ENCODE measurements at regions of chr14 and their contacts with region 1.

Region 1: DNA sequence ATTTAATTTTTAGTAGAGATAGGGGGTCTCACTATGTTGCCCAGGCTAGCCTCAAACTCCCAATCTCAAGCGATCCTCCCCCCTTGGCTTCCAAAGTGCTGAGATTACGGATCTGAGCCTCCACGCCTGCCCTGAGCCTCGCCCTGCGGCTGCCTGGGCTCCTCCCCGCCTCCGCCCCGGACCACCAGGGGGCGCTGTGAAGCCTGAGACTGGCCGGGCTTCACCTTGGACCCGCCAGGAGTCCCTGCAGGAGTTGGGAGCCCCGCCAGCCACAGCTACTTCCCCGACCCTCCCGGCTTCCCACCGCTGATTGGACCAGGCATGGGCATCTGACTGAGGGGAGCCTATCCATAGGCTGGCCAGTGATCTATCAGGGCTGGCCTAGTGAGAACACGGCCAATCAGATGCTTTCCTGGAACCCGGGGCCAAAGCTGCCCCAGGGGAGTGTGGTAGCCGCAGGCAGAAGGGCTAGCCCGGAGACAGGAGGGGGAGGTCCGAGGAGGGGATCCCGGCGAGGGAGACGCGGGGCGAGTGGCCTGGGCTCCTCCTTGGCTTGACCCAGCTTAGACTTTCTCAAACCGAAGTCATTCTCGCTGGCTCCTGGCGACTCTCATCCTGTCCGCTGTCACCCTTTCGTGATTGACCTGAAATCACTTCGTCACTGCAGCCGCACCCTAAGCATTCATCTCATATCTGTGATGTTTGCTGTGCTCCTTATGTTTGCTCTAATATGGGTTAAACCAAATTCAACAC is 15.1 kb upstream of the ANKRD9 start:
- DNase-seq: peak; percentile 84 to 91 (median 87)
- H3K4me3 ChIP-seq: peak overlapping the region; percentile 59 to 87
- H3K4me3 Mint-ChIP-seq: peak overlapping the region; percentile 80 to 93 (median 89)
- H3K27ac ChIP-seq: peak overlapping the region; percentile 48
- H3K27ac Mint-ChIP-seq: peak overlapping the region; percentile 70 to 95 (median 90)
- H3K4me1 ChIP-seq: peaks cover 22% of the 10 kb centered on the region
- H3K4me1 Mint-ChIP-seq: peaks cover 14 to 31% (median 24%) of the 10 kb centered on the region in 4 donors
- H3K27me3 ChIP-seq: no peaks in the 10 kb centered on the region
- H3K27me3 Mint-ChIP-seq: no peaks in the 10 kb centered on the region

Region 2: DNA sequence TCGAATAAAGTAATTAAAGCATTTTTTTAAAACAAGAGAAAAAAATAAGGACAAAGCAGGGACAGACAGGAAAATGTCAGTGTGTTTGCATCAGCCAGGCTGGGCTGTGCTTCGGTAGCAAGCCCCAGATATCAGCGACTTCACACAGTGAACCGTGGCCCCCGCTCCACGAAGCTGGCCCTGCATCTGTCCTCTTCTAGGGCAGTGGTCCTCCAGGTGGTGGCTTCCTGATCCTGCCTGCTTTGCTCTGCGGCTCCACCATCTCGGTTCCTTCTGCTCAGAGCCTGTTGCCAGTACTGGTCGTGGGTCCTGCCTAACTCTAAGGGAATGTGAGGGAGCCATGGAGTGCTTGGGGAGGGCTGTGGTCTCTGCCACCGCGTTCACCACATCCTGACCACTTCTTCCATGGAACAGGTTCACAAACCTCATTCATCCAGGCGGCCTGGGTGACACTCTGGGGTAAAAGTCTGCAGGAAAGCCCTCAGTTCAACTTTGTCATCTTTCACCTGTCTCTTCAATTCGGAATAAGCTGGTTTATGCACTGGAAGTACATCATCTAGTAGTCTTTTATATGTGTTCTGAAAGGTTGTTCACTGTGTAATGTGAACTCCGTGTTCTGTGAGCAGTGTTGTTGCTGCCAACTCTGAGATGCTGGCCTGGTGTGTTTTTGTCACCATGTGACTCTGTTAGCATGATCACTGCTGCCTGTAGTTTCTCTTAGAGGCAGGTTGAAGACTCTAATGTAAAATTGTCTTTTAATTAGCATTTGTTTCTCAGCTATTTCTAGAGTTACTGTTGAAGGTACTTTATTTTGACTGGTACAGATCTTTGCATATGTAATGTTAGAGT is 62.9 kb before region 1 on chr14:
- CTCF ChIA-PET with region 1: no interaction called
- POLR2A ChIA-PET with region 1: no interaction called
- intact Hi-C with region 1: no loop called
- DNase-seq: no peak
- H3K4me3 ChIP-seq: no peak overlapping the region
- H3K4me3 Mint-ChIP-seq: no peak overlapping the region
- H3K27ac ChIP-seq: no peak overlapping the region
- H3K27ac Mint-ChIP-seq: peak overlapping the region in 1 of 7 donors; percentile 62
- H3K4me1 ChIP-seq: no peaks in the 10 kb centered on the region
- H3K4me1 Mint-ChIP-seq: peaks cover 0 to 4% (median 2%) of the 10 kb centered on the region in 4 donors
- H3K27me3 ChIP-seq: no peaks in the 10 kb centered on the region
- H3K27me3 Mint-ChIP-seq: no peaks in the 10 kb centered on the region

Region 3: DNA sequence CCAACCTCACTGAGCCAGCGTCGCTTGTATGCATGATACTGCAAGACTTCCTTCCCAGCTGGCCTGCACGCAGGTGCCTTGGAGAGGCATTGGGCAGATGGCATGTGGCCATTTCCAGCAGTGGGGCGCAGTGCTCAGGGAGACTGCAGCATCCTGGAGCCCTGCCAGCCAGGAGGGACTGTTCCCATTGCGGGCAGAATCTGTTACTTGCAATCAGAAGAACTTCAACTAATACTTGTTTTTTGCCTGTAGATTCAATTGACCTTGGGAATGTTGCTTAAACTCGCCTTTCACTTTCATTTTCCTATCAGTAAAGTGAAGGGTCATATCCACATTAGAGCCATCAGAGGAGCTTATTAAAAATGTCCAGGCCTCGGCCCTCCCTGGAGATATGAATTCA is 44.9 kb before region 1 on chr14:
- CTCF ChIA-PET with region 1: no interaction called
- POLR2A ChIA-PET with region 1: no interaction called
- intact Hi-C with region 1: no loop called
- DNase-seq: no peak
- H3K4me3 ChIP-seq: no peak overlapping the region
- H3K4me3 Mint-ChIP-seq: no peak overlapping the region
- H3K27ac ChIP-seq: no peak overlapping the region
- H3K27ac Mint-ChIP-seq: peak overlapping the region in 1 of 7 donors; percentile 43
- H3K4me1 ChIP-seq: no peaks in the 10 kb centered on the region
- H3K4me1 Mint-ChIP-seq: peaks cover 2 to 14% (median 8%) of the 10 kb centered on the region in 4 donors
- H3K27me3 ChIP-seq: no peaks in the 10 kb centered on the region
- H3K27me3 Mint-ChIP-seq: no peaks in the 10 kb centered on the region

Region 4: GRCh38 chr14:102917469-102918211 is 393.0 kb after region 1 on chr14:
- CTCF ChIA-PET with region 1: interaction called, 3 read pairs
- POLR2A ChIA-PET with region 1: no interaction called
- intact Hi-C with region 1: loop called (anchors 5 kb)
- DNase-seq: peak in 4 of 5 donors; percentile 34 to 46 (median 43)
- H3K4me3 ChIP-seq: no peak overlapping the region
- H3K4me3 Mint-ChIP-seq: no peak overlapping the region
- H3K27ac ChIP-seq: no peak overlapping the region
- H3K27ac Mint-ChIP-seq: peak overlapping the region in 3 of 7 donors; percentile 2 to 87 (median 10)
- H3K4me1 ChIP-seq: no peaks in the 10 kb centered on the region
- H3K4me1 Mint-ChIP-seq: peaks cover 0 to 1% (median 0%) of the 10 kb centered on the region in 4 donors
- H3K27me3 ChIP-seq: no peaks in the 10 kb centered on the region
- H3K27me3 Mint-ChIP-seq: no peaks in the 10 kb centered on the region

Measured in CD4-positive, alpha-beta memory T cell (primary cell).